ENCODE measurements at regions of chr7 and their contacts with region 1.

Region 1: GRCh38 chr7:154338701-154339506 is 286.7 kb downstream of the DPP6 start:
- DNase-seq: no peak
- H3K4me3 ChIP-seq: no peak overlapping the region
- H3K27ac ChIP-seq: no peak overlapping the region
- H3K4me1 ChIP-seq: peaks cover 0 to 8% (median 2%) of the 10 kb centered on the region in 4 donors
- H3K27me3 ChIP-seq: no peaks in the 10 kb centered on the region
- CTCF ChIP-seq: no peak
- EP300 ChIP-seq: no peak
- POLR2A ChIP-seq: no peak

Region 2: GRCh38 chr7:154183482-154183881 is 155.4 kb before region 1 on chr7:
- intact Hi-C with region 1: loop called (anchors 10 kb)
- DNase-seq: no peak
- H3K4me3 ChIP-seq: no peak overlapping the region
- H3K27ac ChIP-seq: no peak overlapping the region
- H3K4me1 ChIP-seq: peaks cover 0 to 12% (median 0%) of the 10 kb centered on the region in 4 donors
- H3K27me3 ChIP-seq: no peaks in the 10 kb centered on the region
- CTCF ChIP-seq: no peak
- EP300 ChIP-seq: no peak
- POLR2A ChIP-seq: no peak